SK-N-SH (cell line): ENCODE measurements at regions of chr20 and their contacts with region 1.

Region 1: DNA sequence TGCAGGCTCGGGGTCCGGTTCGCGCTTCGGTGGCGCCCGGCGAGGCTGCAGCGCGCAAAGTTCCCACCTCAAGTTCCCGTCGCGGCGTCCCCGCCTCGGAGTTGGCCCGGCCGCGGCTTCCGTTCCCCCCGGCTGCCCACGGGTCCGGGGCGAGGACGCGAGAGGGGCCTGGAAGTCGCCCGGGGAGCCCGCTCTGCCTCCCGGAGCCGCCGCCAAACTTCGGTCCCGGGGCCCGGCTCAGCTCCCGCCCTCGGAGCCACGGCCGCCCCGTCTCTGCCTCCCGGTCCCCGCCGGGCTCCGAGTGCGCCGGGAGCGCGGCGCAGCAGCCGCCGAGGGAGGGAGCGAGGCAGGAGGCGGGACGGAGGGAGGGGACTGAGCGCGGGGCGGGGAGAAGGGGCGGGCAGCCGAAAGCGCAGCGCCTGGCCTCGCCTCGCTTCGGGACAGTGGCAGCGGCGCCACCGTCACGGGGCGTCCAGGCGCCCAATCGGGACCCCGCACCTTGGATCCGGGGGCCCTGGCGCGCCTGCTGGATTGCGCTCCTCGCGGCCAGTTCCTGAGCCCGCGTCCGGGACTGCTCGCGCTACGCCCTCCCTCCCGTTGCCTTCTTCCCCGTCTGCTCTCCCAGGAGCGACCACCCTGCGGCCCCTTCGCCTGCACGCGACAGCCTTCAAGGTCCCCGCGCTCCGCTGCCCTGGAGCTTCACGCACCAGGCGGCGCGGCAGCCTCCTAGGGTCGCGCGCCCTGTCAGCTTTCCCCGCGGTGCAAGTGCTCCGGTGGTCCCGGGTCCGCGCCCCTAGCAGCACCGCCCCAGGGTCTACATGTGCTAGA is at the start of gene KCNG1:
- DNase-seq: peak; percentile 97
- H3K4me3 ChIP-seq: peak within 1 kb of the TSS; percentile 66 to 82
- H3K27ac ChIP-seq: peak within 1 kb of the TSS in 1 of 2 experiments; percentile 60; a peak in 1 of 4 replicates
- H3K4me1 ChIP-seq: peaks cover 14 to 43% of the 10 kb centered on the region in 2 experiments; a peak in 2 of 4 replicates
- H3K27me3 ChIP-seq: no peaks in the 10 kb centered on the region; the same call in 1 of the 2 replicates
- CTCF ChIP-seq: no peak
- EP300 ChIP-seq: no peak
- RAD21 ChIP-seq: no peak
- polyA plus RNA-seq, gene KCNG1: 11.2 and 13.8 TPM in 2 replicates

Region 2: GRCh38 chr20:50992733-50993457 is 30.1 kb before region 1 on chr20:
- CTCF ChIA-PET with region 1: interaction called, 11 read pairs
- POLR2A ChIA-PET with region 1: no interaction called
- DNase-seq: peak; percentile 83
- H3K4me3 ChIP-seq: no peak overlapping the region; a peak in 1 of 4 replicates
- H3K27ac ChIP-seq: no peak overlapping the region
- H3K4me1 ChIP-seq: no peaks in the 10 kb centered on the region
- H3K27me3 ChIP-seq: no peaks in the 10 kb centered on the region
- CTCF ChIP-seq: peak; percentile 67
- EP300 ChIP-seq: no peak
- RAD21 ChIP-seq: peak; percentile 79